GM10248 (cell line): ENCODE measurements at regions of chr4 and their contacts with region 1.

Region 1: DNA sequence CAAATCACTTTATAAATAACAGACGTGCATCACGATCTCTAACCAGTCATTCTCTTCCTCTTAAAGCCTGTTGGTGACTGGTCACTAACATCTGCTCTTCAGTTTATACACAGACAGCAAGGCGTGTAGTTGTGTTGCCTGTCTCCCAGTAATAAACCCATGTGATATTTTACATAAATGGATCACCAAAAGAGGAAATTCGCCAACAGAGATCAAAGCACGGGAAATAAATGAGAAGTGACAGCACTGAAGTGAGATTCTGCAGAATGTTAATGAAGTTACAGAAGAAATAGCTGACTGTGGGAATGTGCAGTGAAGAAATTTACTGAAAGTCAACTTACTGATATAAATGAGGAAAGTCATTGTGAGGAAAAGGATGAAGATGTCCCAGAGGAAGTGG is 47.0 kb downstream of the AFF1 start:
- DNase-seq: no peak
- CTCF ChIP-seq: no peak

Region 2: GRCh38 chr4:86970426-86971354 is 11.1 kb before region 1 on chr4:
- CTCF ChIA-PET with region 1: interaction called, 15 read pairs
- POLR2A ChIA-PET with region 1: no interaction called
- DNase-seq: no peak
- CTCF ChIP-seq: no peak